T-cell (primary cell): ENCODE measurements at regions of chr2 and their contacts with region 1.

Region 1: GRCh38 chr2:96737831-96738230 is 2.0 kb downstream of the LMAN2L start:
- DNase-seq: peak in 11 of 35 experiments; percentile 9 to 37 (median 18)
- ATAC-seq: no peak
- H3K4me3 ChIP-seq: no peak overlapping the region
- H3K4me3 Mint-ChIP-seq: peak overlapping the region; percentile 1 to 8 (median 5)
- H3K27ac ChIP-seq: peak overlapping the region; percentile 54
- H3K27ac Mint-ChIP-seq: no peak overlapping the region
- H3K4me1 ChIP-seq: peaks cover 9 to 24% of the 10 kb centered on the region in 2 experiments
- H3K4me1 Mint-ChIP-seq: peaks cover 36 to 47% (median 40%) of the 10 kb centered on the region in 3 donors
- H3K27me3 ChIP-seq: no peaks in the 10 kb centered on the region
- H3K27me3 Mint-ChIP-seq: no peaks in the 10 kb centered on the region

Region 2: GRCh38 chr2:96608469-96609455 is 129.1 kb before region 1 on chr2:
- CTCF ChIA-PET with region 1: no interaction called
- POLR2A ChIA-PET with region 1: no interaction called
- DNase-seq: no peak
- ATAC-seq: no peak
- H3K4me3 ChIP-seq: no peak overlapping the region
- H3K4me3 Mint-ChIP-seq: no peak overlapping the region
- H3K27ac ChIP-seq: no peak overlapping the region
- H3K27ac Mint-ChIP-seq: peak overlapping the region; percentile 46 to 71
- H3K4me1 ChIP-seq: no peaks in the 10 kb centered on the region
- H3K4me1 Mint-ChIP-seq: peaks cover 0 to 11% (median 0%) of the 10 kb centered on the region in 3 donors
- H3K27me3 ChIP-seq: no peaks in the 10 kb centered on the region
- H3K27me3 Mint-ChIP-seq: no peaks in the 10 kb centered on the region

Region 3: DNA sequence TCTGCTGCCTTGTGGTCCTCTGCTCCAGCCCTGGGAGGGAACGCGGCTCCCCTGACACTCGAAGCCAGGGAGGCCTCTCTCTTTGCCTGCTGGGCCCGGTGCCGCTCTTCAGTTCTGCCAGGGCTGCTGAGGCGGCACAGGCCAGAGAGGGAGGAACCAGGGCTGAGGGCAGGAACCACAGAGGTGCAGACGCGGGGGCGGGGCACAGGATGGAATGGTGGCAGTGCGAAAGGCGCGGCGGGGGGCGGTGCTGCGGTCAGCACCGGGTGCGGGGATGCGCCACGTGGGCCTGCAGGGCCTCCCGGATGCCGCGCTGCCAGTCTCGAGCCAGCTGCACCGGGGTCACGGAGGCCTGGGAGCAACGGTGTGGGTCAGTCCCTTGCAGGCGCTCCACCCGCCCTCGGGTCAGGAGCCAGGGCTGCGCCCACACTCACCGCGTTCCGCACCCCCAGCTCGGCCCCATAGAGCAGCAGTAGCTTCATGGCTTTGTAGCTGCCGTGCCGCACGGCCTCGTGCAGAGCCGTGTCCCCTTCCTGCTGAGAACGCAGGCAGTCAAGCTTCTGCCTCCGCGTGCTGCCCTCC is 101.6 kb after region 1 on chr2:
- CTCF ChIA-PET with region 1: no interaction called
- POLR2A ChIA-PET with region 1: interaction called in 1 of 2 experiments, 11 read pairs
- DNase-seq: peak; percentile 70 to 90 (median 83)
- ATAC-seq: peak; percentile 95 to 98 (median 96)
- H3K4me3 ChIP-seq: peak overlapping the region; percentile 41 to 44
- H3K4me3 Mint-ChIP-seq: peak overlapping the region; percentile 28 to 68 (median 62)
- H3K27ac ChIP-seq: peak overlapping the region; percentile 52
- H3K27ac Mint-ChIP-seq: peak overlapping the region; percentile 82 to 83
- H3K4me1 ChIP-seq: peaks cover 8 to 26% of the 10 kb centered on the region in 2 experiments
- H3K4me1 Mint-ChIP-seq: peaks cover 23 to 28% (median 26%) of the 10 kb centered on the region in 3 donors
- H3K27me3 ChIP-seq: no peaks in the 10 kb centered on the region
- H3K27me3 Mint-ChIP-seq: no peaks in the 10 kb centered on the region